Panc1 (cell line): ENCODE measurements at regions of chr9 and their contacts with region 1.

Region 1: GRCh38 chr9:126531120-126531519 is 82.6 kb upstream of the LMX1B start:
- DNase-seq: no peak
- ATAC-seq: no peak
- H3K4me3 ChIP-seq: no peak overlapping the region
- H3K27ac ChIP-seq: no peak overlapping the region
- H3K4me1 ChIP-seq: no peaks in the 10 kb centered on the region
- H3K27me3 ChIP-seq: no peaks in the 10 kb centered on the region
- CTCF ChIP-seq: no peak

Region 2: DNA sequence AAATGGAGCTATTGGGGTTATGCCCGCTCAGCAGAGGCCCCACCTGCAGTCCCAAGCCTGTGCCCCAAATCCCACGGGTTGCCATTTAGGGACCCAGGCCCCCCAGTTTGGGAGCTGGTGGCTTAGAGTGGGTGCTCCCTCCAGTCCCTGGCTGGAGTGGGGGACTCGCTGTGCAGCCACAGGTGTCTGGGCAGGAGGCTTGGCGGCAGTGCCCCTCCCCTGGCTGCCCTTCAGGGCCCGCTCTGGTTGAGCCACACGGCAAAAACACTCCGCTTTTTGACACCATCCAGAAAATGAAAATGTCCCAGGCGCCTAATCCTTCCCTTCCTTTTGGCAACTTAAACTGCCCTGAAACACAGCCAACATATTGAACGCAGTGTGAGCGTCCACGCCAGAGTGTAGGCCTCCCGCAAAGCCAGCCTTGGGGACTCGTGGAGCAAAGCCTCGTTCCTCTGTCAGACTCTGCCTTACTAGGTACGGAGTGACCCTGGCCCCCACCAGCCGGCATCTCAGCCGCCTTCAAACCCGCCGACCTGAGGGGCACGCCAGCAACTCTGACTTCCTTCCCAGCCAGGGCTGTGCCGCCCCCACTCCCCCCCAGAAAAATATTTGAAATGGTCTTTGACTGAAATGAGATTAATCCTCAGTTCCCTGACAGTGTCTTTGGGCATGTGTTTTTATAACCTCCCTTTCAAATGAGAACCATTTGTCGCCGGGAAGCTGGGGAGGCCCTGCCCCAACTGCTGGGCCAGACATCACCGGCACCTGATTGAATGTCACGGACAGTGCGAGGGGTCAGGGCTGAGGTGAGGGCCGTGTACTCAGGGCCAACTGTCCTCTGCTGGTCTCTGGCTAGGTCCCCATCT is 15.9 kb before region 1 on chr9:
- CTCF ChIA-PET with region 1: no interaction called
- POLR2A ChIA-PET with region 1: interaction called, 13 read pairs
- in situ Hi-C with region 1: no loop called
- intact Hi-C with region 1: no loop called
- DNase-seq: no peak
- ATAC-seq: no peak
- H3K4me3 ChIP-seq: no peak overlapping the region
- H3K27ac ChIP-seq: no peak overlapping the region
- H3K4me1 ChIP-seq: peaks cover 5% of the 10 kb centered on the region; the same call in 1 of the 2 replicates
- H3K27me3 ChIP-seq: peaks cover 18% of the 10 kb centered on the region
- CTCF ChIP-seq: no peak